ENCODE measurements at regions of chr7 and their contacts with region 1.

Region 1: GRCh38 chr7:2720582-2721491 is 32.8 kb downstream of the AMZ1 start:
- DNase-seq: peak; percentile 85
- H3K4me3 Mint-ChIP-seq: no peak overlapping the region
- H3K27ac Mint-ChIP-seq: peak overlapping the region; percentile 44
- H3K4me1 Mint-ChIP-seq: peaks cover 48% of the 10 kb centered on the region
- H3K27me3 Mint-ChIP-seq: no peaks in the 10 kb centered on the region

Region 2: DNA sequence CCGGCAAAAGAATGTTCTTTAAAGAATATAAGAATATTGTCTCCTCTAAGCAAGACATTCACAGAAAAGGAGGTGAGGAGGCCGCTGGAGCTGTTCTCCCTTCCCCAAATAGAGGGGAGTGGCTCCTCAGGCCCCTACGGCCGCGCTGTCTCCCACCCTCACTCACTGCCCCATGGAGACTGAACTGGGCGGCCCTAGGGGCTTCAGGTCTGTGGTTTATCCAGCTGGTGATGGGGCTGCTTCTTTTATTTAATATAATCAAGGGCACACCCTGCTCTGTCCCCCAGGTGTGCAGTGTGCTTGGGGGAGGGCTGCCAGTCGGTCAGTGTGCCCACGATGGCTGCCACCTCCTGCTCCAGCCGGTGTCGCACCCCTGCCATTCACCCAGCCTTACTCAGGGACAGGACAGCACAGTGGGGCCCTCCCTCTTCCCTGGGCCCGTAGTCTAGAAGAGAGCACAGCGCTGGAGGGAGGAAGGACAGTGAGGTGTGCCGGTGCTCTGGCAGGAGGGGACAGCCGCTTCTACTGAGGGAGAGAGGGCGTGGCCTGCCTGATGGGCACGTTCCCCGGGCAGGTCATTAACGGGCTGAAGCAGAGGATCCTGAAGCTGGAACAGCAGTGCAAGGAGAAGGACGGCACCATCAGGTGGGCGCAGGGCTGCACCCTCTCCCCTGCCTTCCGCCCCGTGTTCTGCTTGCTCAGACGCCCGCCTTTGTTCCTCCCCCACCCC is 138.7 kb before region 1 on chr7:
- CTCF ChIA-PET with region 1: no interaction called
- POLR2A ChIA-PET with region 1: no interaction called
- DNase-seq: no peak
- H3K4me3 Mint-ChIP-seq: no peak overlapping the region
- H3K27ac Mint-ChIP-seq: no peak overlapping the region
- H3K4me1 Mint-ChIP-seq: no peaks in the 10 kb centered on the region
- H3K27me3 Mint-ChIP-seq: no peaks in the 10 kb centered on the region

Region 3: GRCh38 chr7:2670720-2671391 is 50.0 kb before region 1 on chr7:
- CTCF ChIA-PET with region 1: interaction called, 12 read pairs
- POLR2A ChIA-PET with region 1: no interaction called
- DNase-seq: peak; percentile 71
- H3K4me3 Mint-ChIP-seq: no peak overlapping the region
- H3K27ac Mint-ChIP-seq: no peak overlapping the region
- H3K4me1 Mint-ChIP-seq: peaks cover 8% of the 10 kb centered on the region
- H3K27me3 Mint-ChIP-seq: peaks cover 32% of the 10 kb centered on the region

Region 4: GRCh38 chr7:2903682-2904162 is 182.9 kb after region 1 on chr7:
- CTCF ChIA-PET with region 1: no interaction called
- POLR2A ChIA-PET with region 1: no interaction called
- DNase-seq: no peak
- H3K4me3 Mint-ChIP-seq: no peak overlapping the region
- H3K27ac Mint-ChIP-seq: peak overlapping the region; percentile 55
- H3K4me1 Mint-ChIP-seq: peaks cover 29% of the 10 kb centered on the region
- H3K27me3 Mint-ChIP-seq: no peaks in the 10 kb centered on the region

Measured in activated CD4-positive, alpha-beta memory T cell treated with anti-CD3 and anti-CD28 coated beads, Interleukin-2, amount 10 ng/mL, durations not matched to agents 7 days and 5 days (primary cell).